IMR-90 (cell line): ENCODE measurements at regions of chr12 and their contacts with region 1.

Region 1: GRCh38 chr12:2284857-2285256 is 232.1 kb downstream of the CACNA1C start:
- DNase-seq: peak; percentile 73
- ATAC-seq: peak; percentile 77
- H3K4me3 ChIP-seq: no peak overlapping the region
- H3K27ac ChIP-seq: peak overlapping the region; percentile 64
- H3K4me1 ChIP-seq: peaks cover 44% of the 10 kb centered on the region
- H3K27me3 ChIP-seq: no peaks in the 10 kb centered on the region
- CTCF ChIP-seq: peak; percentile 72
- POLR2A ChIP-seq: no peak
- RAD21 ChIP-seq: peak; percentile 77

Region 2: GRCh38 chr12:1804545-1805332 is 480.1 kb before region 1 on chr12:
- CTCF ChIA-PET with region 1: no interaction called
- POLR2A ChIA-PET with region 1: no interaction called
- dilution Hi-C with region 1: no loop called
- in situ Hi-C with region 1: loop called (anchors 25 kb)
- intact Hi-C with region 1: no loop called
- DNase-seq: peak; percentile 88
- ATAC-seq: peak; percentile 90
- H3K4me3 ChIP-seq: no peak overlapping the region
- H3K27ac ChIP-seq: peak overlapping the region; percentile 12; the same call in 1 of the 2 replicates
- H3K4me1 ChIP-seq: no peaks in the 10 kb centered on the region
- H3K27me3 ChIP-seq: no peaks in the 10 kb centered on the region
- CTCF ChIP-seq: no peak
- POLR2A ChIP-seq: no peak
- RAD21 ChIP-seq: no peak

Region 3: GRCh38 chr12:2057041-2057794 is 227.6 kb before region 1 on chr12:
- CTCF ChIA-PET with region 1: no interaction called
- POLR2A ChIA-PET with region 1: no interaction called
- dilution Hi-C with region 1: no loop called
- in situ Hi-C with region 1: loop called (anchors 5 kb)
- intact Hi-C with region 1: loop called (anchors 1 kb)
- DNase-seq: peak; percentile 62
- ATAC-seq: no peak
- H3K4me3 ChIP-seq: no peak overlapping the region
- H3K27ac ChIP-seq: no peak overlapping the region
- H3K4me1 ChIP-seq: peaks cover 5% of the 10 kb centered on the region; the same call in 1 of the 2 replicates
- H3K27me3 ChIP-seq: no peaks in the 10 kb centered on the region; the same call in 1 of the 2 replicates
- CTCF ChIP-seq: peak; percentile 71
- POLR2A ChIP-seq: no peak
- RAD21 ChIP-seq: peak; percentile 91

Region 4: DNA sequence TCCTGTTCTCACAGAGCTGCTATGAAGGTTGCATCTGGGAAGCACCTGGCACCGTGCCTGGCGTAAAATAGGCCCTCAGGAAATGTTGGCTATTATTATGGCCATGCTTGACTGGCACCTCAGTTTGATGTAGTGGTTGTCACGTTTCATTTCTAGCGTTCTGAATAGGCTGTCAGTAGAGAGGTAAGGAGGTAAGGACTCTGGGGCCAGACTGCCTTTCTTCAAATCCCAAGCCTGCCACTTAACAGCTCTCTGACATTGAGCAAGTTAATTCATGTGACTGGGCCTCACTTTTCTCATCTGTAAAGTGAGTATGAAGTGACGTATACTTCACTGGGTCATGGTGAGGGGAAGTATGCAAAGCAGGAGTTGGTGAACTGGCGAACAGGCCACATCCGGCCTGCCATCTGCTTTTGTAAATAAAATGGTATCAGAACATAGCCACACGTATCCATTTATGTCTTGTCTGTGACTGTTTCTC is 35.9 kb before region 1 on chr12:
- CTCF ChIA-PET with region 1: no interaction called
- POLR2A ChIA-PET with region 1: no interaction called
- dilution Hi-C with region 1: no loop called
- in situ Hi-C with region 1: no loop called
- intact Hi-C with region 1: loop called (anchors 2 kb)
- DNase-seq: peak; percentile 80
- ATAC-seq: no peak
- H3K4me3 ChIP-seq: no peak overlapping the region
- H3K27ac ChIP-seq: peak overlapping the region; percentile 86
- H3K4me1 ChIP-seq: peaks cover 52% of the 10 kb centered on the region
- H3K27me3 ChIP-seq: no peaks in the 10 kb centered on the region
- CTCF ChIP-seq: no peak
- POLR2A ChIP-seq: no peak
- RAD21 ChIP-seq: no peak

Region 5: DNA sequence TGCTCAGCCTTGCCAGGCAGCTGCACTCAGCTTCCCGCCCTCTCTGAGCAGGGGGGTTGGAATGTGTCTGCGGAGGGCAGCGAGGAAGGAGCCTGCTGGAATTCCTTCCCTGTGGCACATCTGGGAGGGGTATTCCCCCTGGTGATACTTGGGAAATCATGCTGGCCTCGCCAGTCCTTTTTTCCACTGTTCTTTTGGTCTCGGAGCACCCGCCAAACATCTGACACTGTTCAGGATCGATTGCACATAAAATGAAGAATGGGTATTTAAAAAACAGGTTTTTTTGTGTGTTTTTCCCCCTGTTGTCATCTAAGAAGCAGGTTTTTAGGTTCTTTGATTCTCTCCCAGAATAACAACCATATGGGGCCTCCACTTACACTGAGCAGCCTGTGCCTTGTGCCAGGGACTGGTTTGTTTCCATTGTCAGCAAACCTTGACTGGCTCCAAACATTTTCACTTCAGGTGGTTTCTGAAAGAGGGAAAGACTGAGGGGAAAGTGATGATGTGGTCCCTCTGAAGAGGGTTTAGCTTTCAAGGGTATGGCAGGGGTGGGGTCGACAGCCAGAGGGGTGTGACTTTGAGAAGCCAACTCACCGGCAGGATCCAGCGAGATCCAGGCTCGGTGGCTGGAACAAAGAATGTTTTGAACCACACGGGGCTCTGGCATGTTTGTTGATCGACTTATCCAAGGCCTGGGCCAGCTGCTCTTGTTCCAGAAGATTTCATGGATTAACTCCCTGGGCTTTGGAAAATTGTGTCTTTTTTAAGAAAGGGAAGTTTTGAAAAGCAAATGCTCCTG is 17.0 kb before region 1 on chr12:
- CTCF ChIA-PET with region 1: no interaction called
- POLR2A ChIA-PET with region 1: no interaction called
- dilution Hi-C with region 1: no loop called
- in situ Hi-C with region 1: no loop called
- intact Hi-C with region 1: no loop called
- DNase-seq: peak; percentile 54
- ATAC-seq: peak; percentile 21
- H3K4me3 ChIP-seq: no peak overlapping the region
- H3K27ac ChIP-seq: peak overlapping the region; percentile 32
- H3K4me1 ChIP-seq: peaks cover 47% of the 10 kb centered on the region
- H3K27me3 ChIP-seq: no peaks in the 10 kb centered on the region
- CTCF ChIP-seq: no peak
- POLR2A ChIP-seq: no peak
- RAD21 ChIP-seq: no peak